GM12878 (cell line): ENCODE measurements at regions of chr12 and their contacts with region 1.

Region 1: GRCh38 chr12:48890657-48891418 is 25.2 kb upstream of the RND1 start:
- DNase-seq: no peak
- ATAC-seq: peak; percentile 100
- H3K4me3 ChIP-seq: no peak overlapping the region
- H3K27ac ChIP-seq: no peak overlapping the region
- H3K4me1 ChIP-seq: no peaks in the 10 kb centered on the region
- H3K27me3 ChIP-seq: no peaks in the 10 kb centered on the region; a peak in 1 of 4 replicates
- CTCF ChIP-seq: peak; percentile 94 to 95 (median 95)
- EP300 ChIP-seq: no peak
- POLR2A ChIP-seq: no peak
- RAD21 ChIP-seq: peak; percentile 78

Region 2: DNA sequence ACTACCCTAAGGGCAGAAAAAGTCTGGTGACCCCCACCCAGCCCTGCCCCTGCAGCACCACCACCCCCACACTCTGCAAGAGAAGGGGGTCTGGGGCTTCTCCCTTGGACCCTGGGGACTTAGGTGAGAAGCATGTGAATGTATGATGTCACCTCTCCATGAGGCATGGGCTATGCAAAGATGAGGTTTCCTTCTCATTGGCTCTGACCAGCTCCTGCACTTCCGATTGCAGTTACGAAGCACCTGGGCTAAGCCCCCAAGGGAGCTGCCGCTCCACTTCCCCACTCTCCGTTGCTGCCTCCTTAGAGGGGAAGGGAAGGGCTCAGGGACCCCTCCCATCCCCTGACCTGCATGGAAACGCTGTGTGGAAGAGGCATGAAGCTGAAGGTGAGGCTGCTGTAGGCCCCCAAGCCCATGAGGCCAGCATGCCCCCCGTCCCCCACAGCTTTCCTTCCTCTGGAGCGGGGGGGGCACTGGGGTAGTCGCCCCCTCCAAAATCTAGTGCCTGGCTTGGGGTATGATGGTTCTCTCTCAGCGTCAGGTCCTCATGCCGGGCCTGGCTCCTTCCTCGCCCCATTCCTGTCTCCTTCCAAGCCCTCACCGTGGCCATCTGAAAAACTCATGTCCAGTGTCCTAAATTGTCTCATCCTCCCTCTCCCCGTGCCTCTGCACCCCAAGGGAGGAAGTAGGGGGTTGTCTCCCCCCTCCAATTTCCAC is 33.4 kb before region 1 on chr12:
- CTCF ChIA-PET with region 1: interaction called, 271 read pairs
- POLR2A ChIA-PET with region 1: interaction called, 22 read pairs
- RAD21 ChIA-PET with region 1: interaction called, 167 read pairs
- SMC1A ChIA-PET with region 1: interaction called, 145 read pairs
- in situ Hi-C with region 1: loop called (anchors 5 kb)
- intact Hi-C with region 1: loop called (anchors 1 kb)
- DNase-seq: no peak
- ATAC-seq: peak; percentile 58
- H3K4me3 ChIP-seq: no peak overlapping the region
- H3K27ac ChIP-seq: no peak overlapping the region
- H3K4me1 ChIP-seq: peaks cover 3% of the 10 kb centered on the region; the same call in 1 of the 2 replicates
- H3K27me3 ChIP-seq: no peaks in the 10 kb centered on the region
- CTCF ChIP-seq: no peak
- EP300 ChIP-seq: no peak
- POLR2A ChIP-seq: no peak
- RAD21 ChIP-seq: no peak

Region 3: GRCh38 chr12:48865434-48866290 is 25.2 kb before region 1 on chr12 and contains the start of gene RND1:
- CTCF ChIA-PET with region 1: interaction called, 75 read pairs
- POLR2A ChIA-PET with region 1: interaction called, 13 read pairs
- RAD21 ChIA-PET with region 1: interaction called, 9 read pairs
- SMC1A ChIA-PET with region 1: interaction called, 11 read pairs
- in situ Hi-C with region 1: no loop called
- intact Hi-C with region 1: no loop called
- DNase-seq: peak; percentile 89
- ATAC-seq: peak; percentile 95
- H3K4me3 ChIP-seq: peak within 1 kb of the TSS; percentile 79
- H3K27ac ChIP-seq: peak within 1 kb of the TSS; percentile 49
- H3K4me1 ChIP-seq: peaks cover 12% of the 10 kb centered on the region
- H3K27me3 ChIP-seq: no peaks in the 10 kb centered on the region
- CTCF ChIP-seq: 0 out of 6 replicates have a peak, but pooled peaks of 1 of the 3 experiments have one; percentile 5
- EP300 ChIP-seq: no peak
- POLR2A ChIP-seq: peak; percentile 99
- RAD21 ChIP-seq: no peak
- polyA plus RNA-seq, gene RND1: 0.24 to 0.42 TPM

Region 4: DNA sequence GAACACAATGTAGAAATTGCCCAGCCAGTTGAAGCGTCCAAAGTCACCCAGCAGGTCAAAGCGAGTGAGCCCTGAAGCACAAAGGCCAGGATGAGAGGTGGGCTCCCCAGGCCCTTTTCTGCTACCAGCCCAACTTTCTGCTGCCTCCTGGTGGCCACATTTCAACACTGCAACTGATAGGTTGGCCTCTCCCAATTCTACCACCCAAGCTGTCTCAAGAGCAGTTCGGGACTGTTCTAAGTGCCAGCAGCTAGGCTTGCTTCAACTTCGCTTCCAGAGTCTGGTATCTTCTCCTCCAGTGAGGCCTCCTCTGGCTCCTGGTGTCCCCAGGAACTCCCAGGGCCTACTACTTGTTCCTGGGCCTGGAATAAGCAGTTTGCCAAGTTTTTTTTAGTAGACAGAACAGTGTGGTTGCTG is 207.2 kb after region 1 on chr12:
- CTCF ChIA-PET with region 1: no interaction called
- POLR2A ChIA-PET with region 1: no interaction called
- RAD21 ChIA-PET with region 1: no interaction called
- SMC1A ChIA-PET with region 1: no interaction called
- in situ Hi-C with region 1: no loop called
- intact Hi-C with region 1: no loop called
- DNase-seq: no peak
- ATAC-seq: peak; percentile 80
- H3K4me3 ChIP-seq: no peak overlapping the region
- H3K27ac ChIP-seq: no peak overlapping the region
- H3K4me1 ChIP-seq: no peaks in the 10 kb centered on the region
- H3K27me3 ChIP-seq: peaks cover 6 to 10% of the 10 kb centered on the region in 2 experiments
- CTCF ChIP-seq: peak; percentile 76 to 89 (median 84)
- EP300 ChIP-seq: no peak
- POLR2A ChIP-seq: no peak
- RAD21 ChIP-seq: peak; percentile 55